Activated B cell treated with CpG ODN at 0.5 μM for 24 hours (primary cell): ENCODE measurements at regions of chr12 and their contacts with region 1.

Region 1: DNA sequence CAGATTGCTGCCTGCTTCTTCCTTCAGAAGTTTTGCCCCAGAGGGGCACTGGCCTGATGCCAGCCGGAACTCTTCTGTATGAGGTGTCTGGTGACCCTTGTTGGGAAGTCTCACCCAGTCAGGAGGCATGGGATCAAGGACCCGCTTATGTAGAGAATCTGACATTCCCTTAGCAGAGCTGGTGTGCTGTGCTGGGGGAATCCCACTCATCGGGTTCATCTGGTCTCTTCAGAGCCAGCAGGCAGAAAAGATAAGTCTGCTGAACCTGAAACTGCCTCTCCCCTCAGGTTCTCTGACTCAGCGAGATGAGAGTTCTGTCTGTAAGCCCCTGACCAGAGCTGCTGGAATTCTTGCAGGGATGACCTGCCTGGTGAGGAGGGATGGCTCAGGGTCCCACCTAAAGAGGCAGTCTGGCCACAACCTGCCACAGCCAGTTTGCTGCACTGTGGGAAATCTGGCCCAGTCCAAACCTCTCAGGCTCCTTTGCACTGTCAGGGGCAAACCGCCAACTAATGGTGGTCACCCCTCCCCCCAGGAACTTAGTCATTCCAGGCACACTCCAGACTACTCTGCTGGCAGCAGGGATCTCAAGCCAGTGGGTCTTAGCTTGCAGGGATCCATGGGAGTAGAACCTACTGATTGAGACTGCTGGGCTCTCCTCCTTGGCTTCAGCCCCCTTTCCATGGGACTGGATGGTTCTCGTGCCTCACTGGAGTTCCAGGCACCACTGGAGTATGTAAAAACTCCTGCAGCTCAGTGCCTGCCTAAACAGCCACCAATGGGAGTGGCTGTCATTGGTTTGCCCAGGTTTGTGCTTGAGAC is 4.1 kb downstream of the CLEC2D start:
- DNase-seq: no peak
- ATAC-seq: peak; percentile 29
- H3K4me3 Mint-ChIP-seq: peak overlapping the region; percentile 95
- H3K27ac Mint-ChIP-seq: peak overlapping the region; percentile 96
- H3K4me1 Mint-ChIP-seq: peaks cover 82% of the 10 kb centered on the region
- H3K27me3 Mint-ChIP-seq: no peaks in the 10 kb centered on the region
- CTCF ChIP-seq: no peak

Region 2: GRCh38 chr12:9588749-9589148 is 84.9 kb before region 1 on chr12:
- CTCF ChIA-PET with region 1: no interaction called
- POLR2A ChIA-PET with region 1: no interaction called
- intact Hi-C with region 1: no loop called
- DNase-seq: no peak
- ATAC-seq: no peak
- H3K4me3 Mint-ChIP-seq: no peak overlapping the region
- H3K27ac Mint-ChIP-seq: no peak overlapping the region
- H3K4me1 Mint-ChIP-seq: no peaks in the 10 kb centered on the region
- H3K27me3 Mint-ChIP-seq: no peaks in the 10 kb centered on the region
- CTCF ChIP-seq: no peak

Region 3: DNA sequence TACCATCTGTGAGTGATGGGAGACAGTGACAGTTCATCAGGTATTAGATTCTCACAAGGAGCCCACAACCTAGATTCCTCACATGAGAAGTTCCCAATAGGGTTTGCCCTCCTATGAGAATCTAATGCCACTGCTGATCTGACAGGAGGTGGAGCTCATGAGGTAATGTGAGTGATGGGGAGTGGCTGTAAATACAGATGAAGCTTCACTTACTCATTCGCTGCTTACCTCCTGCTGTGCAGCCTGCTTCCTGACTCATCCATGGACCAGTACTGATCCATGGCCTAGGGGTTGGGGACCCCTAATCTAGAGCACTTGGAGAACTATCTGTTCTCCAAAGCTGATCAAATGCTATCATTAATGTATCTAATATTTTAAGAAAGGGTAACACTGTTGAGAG is 13.6 kb after region 1 on chr12:
- CTCF ChIA-PET with region 1: interaction called, 4 read pairs
- POLR2A ChIA-PET with region 1: interaction called, 41 read pairs
- intact Hi-C with region 1: loop called (anchors 1 kb)
- DNase-seq: no peak
- ATAC-seq: peak; percentile 29
- H3K4me3 Mint-ChIP-seq: no peak overlapping the region
- H3K27ac Mint-ChIP-seq: no peak overlapping the region
- H3K4me1 Mint-ChIP-seq: peaks cover 61% of the 10 kb centered on the region
- H3K27me3 Mint-ChIP-seq: no peaks in the 10 kb centered on the region
- CTCF ChIP-seq: no peak

Region 4: GRCh38 chr12:9721394-9722092 is 47.9 kb after region 1 on chr12:
- CTCF ChIA-PET with region 1: interaction called, 3 read pairs
- POLR2A ChIA-PET with region 1: interaction called, 66 read pairs
- intact Hi-C with region 1: no loop called
- DNase-seq: no peak
- ATAC-seq: peak; percentile 85
- H3K4me3 Mint-ChIP-seq: peak overlapping the region; percentile 69
- H3K27ac Mint-ChIP-seq: peak overlapping the region; percentile 96
- H3K4me1 Mint-ChIP-seq: peaks cover 95% of the 10 kb centered on the region
- H3K27me3 Mint-ChIP-seq: no peaks in the 10 kb centered on the region
- CTCF ChIP-seq: no peak

Region 5: DNA sequence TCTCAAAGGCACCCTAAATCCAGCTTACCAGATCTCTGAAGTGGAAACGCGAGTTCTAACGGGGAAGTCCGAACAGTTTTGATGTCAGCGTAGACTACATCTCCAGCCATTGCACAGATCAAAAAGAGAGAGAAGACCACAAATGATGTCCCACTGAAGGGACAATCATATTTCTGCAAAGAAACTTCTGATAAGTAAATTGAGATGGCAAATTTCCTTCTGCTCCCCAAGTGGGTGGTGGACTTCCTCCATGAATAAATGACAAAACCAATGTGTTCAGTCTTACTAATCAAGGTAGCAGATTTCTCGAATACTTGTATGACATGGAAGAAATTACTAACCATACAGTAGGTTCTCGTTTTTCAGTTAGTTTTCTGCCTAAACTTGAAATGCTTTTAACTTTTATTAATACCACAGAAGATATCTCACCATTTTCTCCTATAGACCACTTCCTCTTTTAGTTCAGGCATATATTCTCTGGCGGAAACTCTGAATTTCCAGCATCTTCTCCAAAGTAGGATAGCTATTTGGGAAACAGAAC is 59.4 kb after region 1 on chr12 and contains the start of gene CLECL1:
- CTCF ChIA-PET with region 1: interaction called, 3 read pairs
- POLR2A ChIA-PET with region 1: interaction called, 103 read pairs
- intact Hi-C with region 1: loop called (anchors 1 kb)
- DNase-seq: no peak
- ATAC-seq: peak; percentile 49
- H3K4me3 Mint-ChIP-seq: peak within 1 kb of the TSS; percentile 88
- H3K27ac Mint-ChIP-seq: peak within 1 kb of the TSS; percentile 94
- H3K4me1 Mint-ChIP-seq: peaks cover 84% of the 10 kb centered on the region
- H3K27me3 Mint-ChIP-seq: no peaks in the 10 kb centered on the region
- CTCF ChIP-seq: no peak
- total RNA-seq, gene CLECL1: 111 and 115 TPM in 2 replicates

Region 6: DNA sequence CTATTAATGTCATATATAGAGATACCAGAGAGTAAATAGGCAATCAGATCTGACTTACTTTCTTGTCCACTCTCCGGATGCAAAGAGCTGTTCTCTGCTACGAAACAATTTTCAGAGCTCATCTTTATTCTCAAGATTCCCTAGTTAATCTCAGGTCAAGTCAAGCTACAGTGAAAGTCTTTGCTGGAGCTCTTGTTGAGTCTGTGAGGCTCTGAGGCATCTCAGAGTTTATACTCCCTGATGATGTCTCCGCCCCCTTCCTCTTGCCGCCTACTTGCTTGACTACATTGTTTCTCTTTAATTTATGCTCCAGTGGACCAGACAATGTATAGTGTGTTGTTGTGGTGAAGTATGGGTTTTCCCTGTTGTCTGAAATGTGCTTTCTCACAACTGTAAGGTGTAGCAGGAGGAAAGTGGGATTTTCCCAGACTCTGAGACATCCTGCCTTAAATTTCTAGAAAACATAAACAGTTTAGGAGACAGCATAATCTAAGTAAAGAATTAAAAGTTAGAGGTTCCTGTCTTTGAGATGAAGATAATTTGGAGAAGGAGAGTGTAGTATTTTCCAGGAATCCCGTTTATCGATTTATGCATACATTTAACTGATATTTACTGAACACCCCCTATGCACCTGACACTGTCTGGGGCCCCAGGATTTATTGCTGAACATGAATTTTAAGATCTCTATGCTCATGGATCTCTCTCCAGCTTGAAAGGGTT is 87.2 kb after region 1 on chr12 and contains the start of gene CD69:
- CTCF ChIA-PET with region 1: no interaction called
- POLR2A ChIA-PET with region 1: interaction called, 43 read pairs
- intact Hi-C with region 1: no loop called
- DNase-seq: peak; percentile 33
- ATAC-seq: peak; percentile 54
- H3K4me3 Mint-ChIP-seq: peak within 1 kb of the TSS; percentile 90
- H3K27ac Mint-ChIP-seq: peak within 1 kb of the TSS; percentile 93
- H3K4me1 Mint-ChIP-seq: peaks cover 81% of the 10 kb centered on the region
- H3K27me3 Mint-ChIP-seq: no peaks in the 10 kb centered on the region
- CTCF ChIP-seq: no peak
- total RNA-seq, gene CD69: 23.7 and 26.7 TPM in 2 replicates